WTC11 (cell line): ENCODE measurements at regions of chr12 and their contacts with region 1.

Region 1: DNA sequence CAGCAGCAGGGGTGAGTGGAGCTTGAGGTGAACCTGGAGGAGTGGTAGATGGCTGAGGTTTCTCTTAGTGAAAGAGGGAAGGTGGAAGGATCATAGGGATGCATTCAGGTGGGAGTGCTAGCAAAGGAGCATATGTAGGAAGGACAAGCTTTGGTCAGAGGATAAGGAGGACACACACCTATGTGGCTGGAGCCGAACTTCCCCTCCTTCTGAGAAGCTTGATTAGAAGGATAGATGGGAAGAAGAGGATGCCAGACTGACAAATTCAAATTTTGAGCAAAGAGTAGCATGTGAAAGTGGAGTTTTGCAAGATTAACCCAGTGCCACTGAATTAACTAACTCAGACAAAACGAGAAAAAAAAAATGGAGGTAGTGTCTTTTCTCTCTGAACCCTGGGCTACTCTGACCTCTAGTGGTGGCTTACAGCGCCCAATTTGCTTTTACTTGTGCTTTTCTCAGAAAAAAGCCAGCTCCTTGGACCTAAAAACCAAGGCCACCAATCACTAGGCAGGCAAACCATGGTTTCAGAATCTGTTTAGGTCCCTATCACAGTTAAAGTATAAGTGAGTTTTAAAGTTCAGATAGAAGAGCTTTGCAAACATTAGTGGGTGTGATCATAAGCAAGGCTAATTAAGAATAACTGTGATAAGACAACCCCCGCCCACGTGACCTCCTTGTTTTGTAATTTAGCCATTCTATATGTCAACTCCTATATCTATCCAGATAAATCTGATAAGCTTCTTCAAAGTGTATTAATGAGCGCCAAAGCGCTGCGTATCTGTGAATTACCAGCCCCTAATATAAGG is 15.5 kb downstream of the EMP1 start:
- DNase-seq: peak; percentile 68
- ATAC-seq: peak; percentile 27
- H3K4me3 Mint-ChIP-seq: no peak overlapping the region; the same call in 1 of the 2 replicates
- H3K27ac Mint-ChIP-seq: peak overlapping the region; percentile 82
- H3K4me1 Mint-ChIP-seq: peaks cover 31% of the 10 kb centered on the region
- H3K27me3 Mint-ChIP-seq: no peaks in the 10 kb centered on the region
- CTCF ChIP-seq: peak; percentile 49; the same call in 1 of the 2 replicates

Region 2: DNA sequence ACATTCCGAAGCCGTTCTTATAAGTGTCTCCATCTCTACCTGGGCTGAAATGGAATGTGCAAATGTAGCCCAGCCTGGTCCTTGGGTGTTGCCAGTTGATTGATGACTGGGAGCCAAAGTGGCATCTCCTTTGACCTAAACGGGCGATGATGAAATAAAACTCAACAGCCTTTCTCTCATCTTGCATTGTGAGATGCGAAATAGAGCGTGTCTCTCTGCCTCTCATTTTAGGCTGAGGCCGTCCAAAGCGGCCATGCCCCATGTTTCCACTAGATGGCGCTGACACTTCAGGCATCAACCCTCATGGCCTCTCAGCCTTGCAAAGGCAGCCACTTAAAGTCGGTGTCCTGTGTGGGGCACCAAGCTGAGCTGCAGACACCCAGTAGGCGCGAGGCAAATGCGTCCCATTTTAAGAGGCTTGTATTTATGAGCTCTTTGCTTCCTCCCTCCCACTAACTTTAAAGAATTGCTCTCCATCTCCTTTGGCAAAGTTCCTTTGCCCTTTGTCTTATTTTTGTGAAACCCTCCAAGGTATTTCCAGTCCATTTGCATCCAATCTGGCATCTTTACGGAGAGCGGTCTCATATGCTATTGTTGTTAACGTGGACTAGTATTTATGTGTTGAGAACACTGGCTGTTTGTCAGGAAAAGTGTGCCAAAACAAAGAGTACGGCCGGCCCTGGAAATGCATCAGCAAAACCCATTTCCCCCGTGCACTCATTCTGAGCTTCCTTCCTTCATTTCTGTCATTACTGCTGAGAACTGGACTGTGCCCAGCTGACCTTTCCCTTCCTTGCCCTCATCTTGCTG is 295.7 kb before region 1 on chr12:
- CTCF ChIA-PET with region 1: interaction called, 43 read pairs
- POLR2A ChIA-PET with region 1: no interaction called
- DNase-seq: peak; percentile 90
- ATAC-seq: peak; percentile 88
- H3K4me3 Mint-ChIP-seq: no peak overlapping the region
- H3K27ac Mint-ChIP-seq: no peak overlapping the region
- H3K4me1 Mint-ChIP-seq: peaks cover 27% of the 10 kb centered on the region
- H3K27me3 Mint-ChIP-seq: peaks cover 3% of the 10 kb centered on the region
- CTCF ChIP-seq: peak; percentile 98

Region 3: GRCh38 chr12:12983420-12984035 is 228.5 kb before region 1 on chr12:
- CTCF ChIA-PET with region 1: interaction called, 39 read pairs
- POLR2A ChIA-PET with region 1: interaction called, 3 read pairs
- DNase-seq: no peak
- ATAC-seq: no peak
- H3K4me3 Mint-ChIP-seq: no peak overlapping the region
- H3K27ac Mint-ChIP-seq: 0 out of 2 replicates have a peak overlapping the region, but pooled peaks have one; percentile 19
- H3K4me1 Mint-ChIP-seq: peaks cover 18% of the 10 kb centered on the region
- H3K27me3 Mint-ChIP-seq: no peaks in the 10 kb centered on the region
- CTCF ChIP-seq: no peak

Region 4: DNA sequence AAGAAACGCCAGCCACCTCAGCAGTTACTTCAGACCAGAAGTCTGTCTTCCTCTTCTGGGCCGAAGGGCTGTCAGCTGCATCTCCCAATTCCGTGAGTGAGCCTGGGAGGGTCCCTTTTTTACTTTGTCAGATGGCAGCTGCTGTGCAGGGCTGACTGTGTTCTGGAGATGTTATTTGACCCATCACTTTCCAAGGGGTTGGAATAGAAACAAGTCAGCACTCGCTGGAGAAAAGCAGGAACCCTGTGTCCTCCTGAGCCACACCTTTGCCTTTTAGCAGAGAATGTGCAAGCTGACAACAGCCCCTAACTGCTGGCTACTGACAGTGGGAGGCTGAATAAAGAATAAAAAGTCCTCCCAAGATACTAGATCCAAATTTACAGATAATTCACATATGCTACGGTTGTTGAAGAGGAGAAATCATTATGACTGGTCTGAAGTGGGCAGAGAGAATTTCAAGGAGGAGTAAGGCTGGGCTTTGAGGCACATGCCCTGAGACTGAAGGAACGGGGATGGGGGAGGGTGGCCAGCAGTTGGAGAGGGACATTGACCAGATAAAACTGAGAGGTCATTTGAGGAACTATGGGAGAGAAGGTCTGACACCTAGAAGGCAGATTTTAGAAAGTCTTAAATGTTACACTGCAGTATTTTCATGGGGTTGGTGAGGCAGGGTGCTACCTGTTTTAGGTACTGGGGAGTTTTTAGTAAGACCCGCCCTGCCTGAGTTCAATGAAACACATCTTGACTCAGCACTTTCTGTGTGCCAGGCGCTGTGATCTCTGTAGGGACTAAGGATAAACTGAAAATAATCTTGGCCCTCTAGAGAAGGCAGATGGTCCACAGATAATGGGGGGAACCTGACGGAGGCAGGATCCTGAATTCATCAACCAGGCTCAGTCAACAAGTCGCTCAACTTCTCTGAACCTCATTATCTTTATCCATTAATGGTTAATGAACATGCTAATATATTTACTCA is 140.5 kb before region 1 on chr12:
- CTCF ChIA-PET with region 1: no interaction called
- POLR2A ChIA-PET with region 1: no interaction called
- DNase-seq: no peak
- ATAC-seq: no peak
- H3K4me3 Mint-ChIP-seq: no peak overlapping the region
- H3K27ac Mint-ChIP-seq: peak overlapping the region; percentile 15
- H3K4me1 Mint-ChIP-seq: peaks cover 5% of the 10 kb centered on the region; the same call in 1 of the 2 replicates
- H3K27me3 Mint-ChIP-seq: no peaks in the 10 kb centered on the region
- CTCF ChIP-seq: no peak

Region 5: DNA sequence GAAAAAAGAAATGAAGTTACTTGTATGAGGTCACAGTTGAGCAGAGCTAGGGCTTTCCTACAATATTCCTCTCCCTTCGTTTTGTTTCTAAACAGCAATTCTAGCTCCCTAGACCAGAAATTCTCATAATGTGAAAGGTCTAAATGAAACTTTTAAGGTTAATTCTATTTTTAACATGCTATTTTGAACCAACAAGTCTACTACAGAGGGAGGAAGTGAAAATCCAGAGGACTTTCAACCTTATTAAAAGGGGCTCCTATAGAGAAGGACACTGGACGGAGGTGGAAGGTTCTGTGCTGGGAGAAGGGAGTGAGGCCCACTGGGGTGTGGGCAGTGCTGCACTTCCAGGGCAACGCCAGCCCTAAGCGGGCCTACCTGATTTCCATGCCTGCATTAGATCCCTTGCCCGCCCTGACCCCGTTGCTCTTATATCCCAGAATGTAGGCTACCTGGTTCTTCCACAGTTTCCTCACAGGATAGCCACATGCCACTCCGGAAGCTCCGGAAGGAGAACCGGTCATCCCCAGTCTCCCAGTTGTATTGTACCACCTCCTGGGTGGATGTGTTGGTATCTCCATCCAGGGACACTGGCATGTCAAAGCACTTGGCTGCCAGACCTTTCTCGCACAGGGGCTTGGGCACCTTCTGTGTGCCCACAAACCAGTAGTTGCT is 121.9 kb before region 1 on chr12:
- CTCF ChIA-PET with region 1: interaction called, 19 read pairs
- POLR2A ChIA-PET with region 1: no interaction called
- DNase-seq: no peak
- ATAC-seq: no peak
- H3K4me3 Mint-ChIP-seq: no peak overlapping the region
- H3K27ac Mint-ChIP-seq: no peak overlapping the region
- H3K4me1 Mint-ChIP-seq: peaks cover 71% of the 10 kb centered on the region
- H3K27me3 Mint-ChIP-seq: no peaks in the 10 kb centered on the region
- CTCF ChIP-seq: no peak

Region 6: GRCh38 chr12:13179211-13180074 is 32.6 kb before region 1 on chr12:
- CTCF ChIA-PET with region 1: interaction called, 11 read pairs
- POLR2A ChIA-PET with region 1: no interaction called
- DNase-seq: peak; percentile 68
- ATAC-seq: peak; percentile 97
- H3K4me3 Mint-ChIP-seq: peak overlapping the region; percentile 40
- H3K27ac Mint-ChIP-seq: peak overlapping the region; percentile 88
- H3K4me1 Mint-ChIP-seq: peaks cover 39% of the 10 kb centered on the region
- H3K27me3 Mint-ChIP-seq: no peaks in the 10 kb centered on the region
- CTCF ChIP-seq: no peak

Region 7: DNA sequence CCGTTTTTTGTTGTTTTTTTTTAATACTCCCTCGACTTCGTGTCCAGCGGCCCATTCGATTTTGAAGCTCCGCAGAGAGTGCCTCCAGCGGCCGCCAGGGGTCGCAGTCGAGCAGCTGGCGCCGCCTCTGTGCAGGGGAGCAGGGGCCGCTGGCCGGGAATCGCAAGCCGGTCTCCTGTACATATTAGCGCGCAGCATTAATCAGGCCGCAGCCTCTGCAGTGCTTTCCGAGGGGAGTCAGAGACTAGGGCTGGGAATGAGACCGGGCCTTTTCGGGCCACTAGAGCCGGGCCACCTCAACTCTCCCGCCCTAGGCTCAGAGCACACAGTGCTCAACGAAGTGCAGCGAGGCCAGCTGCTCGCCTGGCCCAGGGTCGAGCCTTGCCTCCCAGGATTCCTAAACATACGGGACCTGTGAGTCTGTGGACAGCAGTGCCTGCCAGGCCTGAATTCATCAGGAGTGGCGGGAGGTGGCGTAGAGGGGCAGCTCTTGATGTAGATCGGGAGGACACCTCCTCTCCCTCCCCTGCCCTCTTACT is 66.3 kb after region 1 on chr12:
- CTCF ChIA-PET with region 1: interaction called, 13 read pairs
- POLR2A ChIA-PET with region 1: no interaction called
- DNase-seq: peak; percentile 83
- ATAC-seq: peak; percentile 90
- H3K4me3 Mint-ChIP-seq: peak overlapping the region; percentile 24; the same call in 1 of the 2 replicates
- H3K27ac Mint-ChIP-seq: no peak overlapping the region
- H3K4me1 Mint-ChIP-seq: peaks cover 28% of the 10 kb centered on the region
- H3K27me3 Mint-ChIP-seq: no peaks in the 10 kb centered on the region; the same call in none of the 2 replicates
- CTCF ChIP-seq: peak; percentile 99

Region 8: DNA sequence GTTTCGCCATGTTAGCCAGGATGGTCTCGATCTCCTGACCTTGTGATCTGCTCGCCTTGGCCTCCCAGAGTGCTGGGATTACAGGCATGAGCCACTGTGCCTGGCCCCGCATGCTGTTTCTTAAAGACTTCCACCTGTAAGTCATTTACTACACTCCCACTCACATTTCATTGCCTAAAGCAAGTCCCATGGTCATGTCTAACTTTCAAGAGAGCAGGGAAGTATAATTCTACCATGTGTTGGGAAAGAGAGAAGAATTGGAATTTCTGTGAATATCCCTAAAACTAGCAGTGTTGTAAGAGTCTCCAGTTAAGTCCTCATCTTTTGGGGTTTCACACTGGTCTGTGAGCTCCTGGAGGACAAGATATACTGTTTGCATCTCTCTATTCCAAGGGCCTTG is 124.2 kb after region 1 on chr12:
- CTCF ChIA-PET with region 1: no interaction called
- POLR2A ChIA-PET with region 1: no interaction called
- DNase-seq: no peak
- ATAC-seq: no peak
- H3K4me3 Mint-ChIP-seq: no peak overlapping the region
- H3K27ac Mint-ChIP-seq: no peak overlapping the region
- H3K4me1 Mint-ChIP-seq: no peaks in the 10 kb centered on the region
- H3K27me3 Mint-ChIP-seq: no peaks in the 10 kb centered on the region; the same call in 1 of the 2 replicates
- CTCF ChIP-seq: no peak